ENCODE measurements at regions of chr1 and their contacts with region 1.

Region 1: GRCh38 chr1:78145105-78145580 is 99.4 kb downstream of the GIPC2 start:
- H3K4me3 ChIP-seq: no peak overlapping the region
- H3K27ac ChIP-seq: no peak overlapping the region
- H3K4me1 ChIP-seq: no peaks in the 10 kb centered on the region
- CTCF ChIP-seq: peak; percentile 54; the same call in 1 of the 2 replicates

Region 2: GRCh38 chr1:78101514-78101913 is 43.6 kb before region 1 on chr1:
- CTCF ChIA-PET with region 1: no interaction called
- POLR2A ChIA-PET with region 1: no interaction called
- H3K4me3 ChIP-seq: no peak overlapping the region
- H3K27ac ChIP-seq: no peak overlapping the region
- H3K4me1 ChIP-seq: no peaks in the 10 kb centered on the region
- CTCF ChIP-seq: no peak

Region 3: DNA sequence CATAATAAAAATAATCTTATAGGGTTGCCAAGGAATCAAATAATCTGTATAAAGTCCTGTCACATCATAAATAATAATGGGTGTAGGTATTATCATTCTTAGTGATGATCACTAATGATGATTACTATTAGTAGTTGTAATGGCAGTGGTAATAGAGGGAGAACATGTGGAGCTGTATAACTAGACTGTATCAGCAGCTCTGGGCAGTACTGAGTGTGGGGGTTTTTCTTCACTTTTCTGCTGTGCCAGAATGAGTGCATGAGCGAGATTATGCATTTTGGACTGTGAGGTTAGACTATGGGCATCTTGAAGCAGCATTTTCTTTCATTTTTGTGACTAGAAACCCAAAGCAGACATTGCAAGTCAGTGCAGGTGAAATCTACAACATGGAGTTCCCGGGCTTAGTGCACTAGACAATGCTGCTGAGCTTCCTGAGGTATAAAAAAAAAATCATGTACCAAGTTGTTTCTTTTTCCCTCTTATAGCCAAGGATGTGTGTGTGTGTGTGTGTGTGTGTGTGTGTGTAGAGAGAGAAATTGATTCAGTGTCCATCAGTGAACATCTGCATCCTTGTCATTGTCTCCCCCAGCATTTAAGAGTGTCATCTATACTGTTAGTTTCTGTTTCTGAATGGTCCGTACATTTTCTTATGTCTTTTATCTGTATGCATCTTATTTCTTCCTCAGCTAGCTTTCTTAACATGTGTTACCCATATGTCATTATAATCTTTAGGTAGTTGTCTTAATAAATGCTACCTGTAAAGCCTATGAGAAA is 12.8 kb before region 1 on chr1:
- CTCF ChIA-PET with region 1: interaction called, 33 read pairs
- POLR2A ChIA-PET with region 1: no interaction called
- H3K4me3 ChIP-seq: no peak overlapping the region
- H3K27ac ChIP-seq: no peak overlapping the region
- H3K4me1 ChIP-seq: no peaks in the 10 kb centered on the region
- CTCF ChIP-seq: no peak

Region 4: DNA sequence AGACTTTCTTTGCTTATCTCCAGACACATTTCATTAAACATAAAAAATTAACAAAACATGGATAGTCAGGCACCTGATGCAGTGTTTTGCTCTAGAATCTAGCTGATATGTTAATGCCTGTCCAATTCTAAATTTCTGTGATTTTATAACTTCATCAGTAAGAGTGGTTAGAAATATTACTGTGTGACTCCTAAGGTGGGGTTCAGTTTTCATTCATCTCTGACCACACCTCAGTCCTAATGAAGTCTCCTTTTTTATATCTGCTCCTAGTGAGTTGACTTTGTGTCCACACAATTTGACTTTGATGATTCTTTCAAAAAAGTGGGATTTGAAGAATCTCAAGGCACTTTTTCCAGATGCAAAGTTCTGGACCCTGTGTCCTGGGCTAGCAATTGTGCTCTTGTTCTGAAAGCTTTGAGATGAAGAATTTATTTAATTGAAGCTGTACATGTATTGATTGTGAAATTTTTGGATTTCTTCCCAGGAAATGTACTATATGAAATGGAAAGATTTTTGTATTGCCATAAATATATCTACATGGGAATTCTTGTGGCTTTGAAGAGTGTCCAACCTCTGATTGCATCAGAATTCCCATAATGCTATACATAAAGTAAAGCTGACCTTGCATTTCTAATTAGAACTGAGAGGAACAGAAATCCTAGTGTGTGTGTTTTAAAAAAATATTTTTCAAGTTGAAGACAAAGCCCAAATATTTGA is 11.8 kb after region 1 on chr1:
- CTCF ChIA-PET with region 1: interaction called, 19 read pairs
- POLR2A ChIA-PET with region 1: no interaction called
- H3K4me3 ChIP-seq: no peak overlapping the region
- H3K27ac ChIP-seq: no peak overlapping the region
- H3K4me1 ChIP-seq: no peaks in the 10 kb centered on the region
- CTCF ChIP-seq: no peak

Region 5: GRCh38 chr1:78607334-78607927 is 462.3 kb after region 1 on chr1:
- CTCF ChIA-PET with region 1: interaction called, 50 read pairs
- POLR2A ChIA-PET with region 1: no interaction called
- H3K4me3 ChIP-seq: no peak overlapping the region
- H3K27ac ChIP-seq: no peak overlapping the region
- H3K4me1 ChIP-seq: no peaks in the 10 kb centered on the region
- CTCF ChIP-seq: peak; percentile 14; the same call in 1 of the 2 replicates